Activated CD8-positive, alpha-beta T cell treated with anti-CD3 and anti-CD28 coated beads for 36 hours (primary cell): ENCODE measurements at regions of chr3 and their contacts with region 1.

Region 1: DNA sequence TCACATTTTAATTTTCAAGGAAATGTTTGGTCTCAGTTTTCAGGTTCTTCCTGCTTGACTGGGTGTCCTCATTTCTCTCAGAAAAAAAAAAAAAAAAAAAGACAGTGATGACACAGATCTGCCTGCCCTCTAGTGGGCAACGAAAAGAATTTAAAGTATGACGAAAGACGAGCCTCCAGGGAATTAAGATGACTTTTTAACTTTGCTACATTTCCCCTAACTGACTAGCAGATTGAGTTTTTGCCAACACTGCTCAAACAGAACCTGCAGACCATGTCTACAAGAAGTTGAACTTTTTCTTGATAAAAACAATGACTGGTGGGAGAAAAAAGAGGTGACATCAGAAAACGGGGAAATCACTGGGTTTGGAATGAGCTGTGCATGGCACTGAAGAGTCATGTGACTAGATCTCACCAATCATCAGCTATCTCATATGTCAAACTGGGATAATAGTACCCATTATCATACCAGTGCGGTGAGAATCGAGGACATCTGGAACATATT is 40.8 kb downstream of the EOMES start:
- DNase-seq: peak; percentile 16
- ATAC-seq: peak; percentile 87
- H3K4me3 Mint-ChIP-seq: peak overlapping the region; percentile 72
- H3K27ac Mint-ChIP-seq: peak overlapping the region; percentile 85
- H3K4me1 Mint-ChIP-seq: peaks cover 11% of the 10 kb centered on the region
- H3K27me3 Mint-ChIP-seq: peaks cover 3% of the 10 kb centered on the region
- CTCF ChIP-seq: peak; percentile 83

Region 2: GRCh38 chr3:27134165-27134796 is 547.0 kb before region 1 on chr3:
- CTCF ChIA-PET with region 1: interaction called, 14 read pairs
- POLR2A ChIA-PET with region 1: no interaction called
- intact Hi-C with region 1: loop called (anchors 5 kb)
- DNase-seq: peak; percentile 71
- ATAC-seq: peak; percentile 91
- H3K4me3 Mint-ChIP-seq: no peak overlapping the region
- H3K27ac Mint-ChIP-seq: no peak overlapping the region
- H3K4me1 Mint-ChIP-seq: no peaks in the 10 kb centered on the region
- H3K27me3 Mint-ChIP-seq: no peaks in the 10 kb centered on the region
- CTCF ChIP-seq: peak; percentile 90

Region 3: DNA sequence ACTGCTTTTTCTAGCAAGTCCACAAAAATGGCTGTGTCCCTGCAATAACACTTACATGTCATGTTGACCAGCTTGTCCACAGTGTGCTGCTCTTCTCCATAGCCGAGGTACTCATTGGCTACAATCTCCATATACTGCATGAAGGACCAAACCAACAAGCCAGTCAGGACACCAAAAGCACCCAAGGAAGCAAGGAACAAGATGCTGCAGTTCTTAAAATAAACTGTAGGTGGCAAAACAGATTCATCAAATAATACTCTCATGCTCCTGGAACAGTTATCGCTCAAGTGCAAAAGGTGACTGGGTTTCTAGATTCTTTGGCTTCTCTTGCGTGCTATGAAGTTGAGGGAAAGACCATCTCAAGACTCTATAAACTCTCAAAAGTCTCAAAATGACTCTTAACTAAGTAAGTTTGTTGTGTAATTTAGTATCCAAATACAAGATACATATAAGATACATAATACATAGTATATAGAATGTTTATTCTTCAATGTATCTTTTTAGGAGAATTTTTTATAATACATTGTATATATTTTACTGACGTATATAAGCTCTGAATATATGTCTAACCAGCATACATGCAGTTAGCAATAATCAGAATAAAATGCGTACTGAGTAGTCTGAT is 369.1 kb before region 1 on chr3:
- CTCF ChIA-PET with region 1: interaction called, 10 read pairs
- POLR2A ChIA-PET with region 1: no interaction called
- intact Hi-C with region 1: loop called (anchors 1 kb)
- DNase-seq: peak; percentile 1
- ATAC-seq: peak; percentile 77
- H3K4me3 Mint-ChIP-seq: no peak overlapping the region
- H3K27ac Mint-ChIP-seq: no peak overlapping the region
- H3K4me1 Mint-ChIP-seq: no peaks in the 10 kb centered on the region
- H3K27me3 Mint-ChIP-seq: no peaks in the 10 kb centered on the region
- CTCF ChIP-seq: peak; percentile 70

Region 4: DNA sequence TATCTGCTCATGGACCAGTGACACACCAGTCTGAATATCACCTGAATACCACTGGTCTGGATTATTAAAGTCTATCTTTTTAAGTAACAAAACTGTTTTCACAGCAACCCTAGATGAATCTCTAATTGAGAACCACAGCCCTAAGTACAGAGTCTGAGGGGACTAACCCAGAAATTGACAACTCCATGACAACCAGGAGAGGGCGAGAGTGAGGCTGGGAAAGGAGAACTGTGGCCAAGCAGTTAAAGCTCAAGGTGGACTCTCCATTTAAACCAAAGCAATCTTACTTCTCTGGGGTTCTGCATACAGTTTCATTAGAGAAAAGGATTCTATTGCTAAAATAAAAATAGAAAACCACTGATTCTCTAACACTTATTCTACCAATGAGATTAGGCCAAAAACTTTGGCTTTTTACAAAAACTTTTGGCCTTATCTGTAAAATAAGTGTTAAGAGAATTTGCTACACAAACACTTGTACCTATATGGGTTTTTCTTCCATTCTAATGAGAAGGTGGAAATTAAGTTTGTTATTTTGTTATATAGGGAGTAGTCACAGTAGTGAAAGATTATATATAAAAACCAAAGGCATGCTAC is 323.5 kb before region 1 on chr3:
- CTCF ChIA-PET with region 1: interaction called, 13 read pairs
- POLR2A ChIA-PET with region 1: no interaction called
- intact Hi-C with region 1: loop called (anchors 10 kb)
- DNase-seq: peak; percentile 74
- ATAC-seq: peak; percentile 96
- H3K4me3 Mint-ChIP-seq: no peak overlapping the region
- H3K27ac Mint-ChIP-seq: no peak overlapping the region
- H3K4me1 Mint-ChIP-seq: peaks cover 19% of the 10 kb centered on the region
- H3K27me3 Mint-ChIP-seq: no peaks in the 10 kb centered on the region
- CTCF ChIP-seq: peak; percentile 83

Region 5: DNA sequence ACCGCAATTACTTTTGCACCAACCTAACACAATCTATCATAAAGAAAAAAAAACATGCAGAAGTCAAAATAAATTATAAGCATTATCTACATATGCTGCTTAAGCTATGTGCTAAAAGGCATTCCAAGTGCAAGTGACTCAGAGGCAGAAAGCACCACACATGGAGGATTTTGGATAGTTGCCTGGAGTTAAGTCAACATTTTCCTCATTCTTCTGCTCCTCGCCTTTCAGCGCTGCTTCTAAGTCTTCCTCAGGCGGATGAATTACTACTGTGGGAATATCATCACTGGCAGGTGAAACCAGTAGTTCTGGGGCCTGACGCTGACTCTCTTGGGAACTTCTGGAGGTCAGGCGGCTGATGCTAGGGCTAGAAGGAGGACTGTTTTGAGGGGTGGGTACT is 250.2 kb before region 1 on chr3:
- CTCF ChIA-PET with region 1: no interaction called
- POLR2A ChIA-PET with region 1: no interaction called
- intact Hi-C with region 1: no loop called
- DNase-seq: no peak
- ATAC-seq: no peak
- H3K4me3 Mint-ChIP-seq: no peak overlapping the region
- H3K27ac Mint-ChIP-seq: no peak overlapping the region
- H3K4me1 Mint-ChIP-seq: no peaks in the 10 kb centered on the region
- H3K27me3 Mint-ChIP-seq: no peaks in the 10 kb centered on the region
- CTCF ChIP-seq: no peak

Region 6: GRCh38 chr3:27467545-27467944 is 213.8 kb before region 1 on chr3:
- CTCF ChIA-PET with region 1: interaction called, 10 read pairs
- POLR2A ChIA-PET with region 1: no interaction called
- intact Hi-C with region 1: no loop called
- DNase-seq: no peak
- ATAC-seq: peak; percentile 89
- H3K4me3 Mint-ChIP-seq: no peak overlapping the region
- H3K27ac Mint-ChIP-seq: peak overlapping the region; percentile 11
- H3K4me1 Mint-ChIP-seq: peaks cover 12% of the 10 kb centered on the region
- H3K27me3 Mint-ChIP-seq: no peaks in the 10 kb centered on the region
- CTCF ChIP-seq: peak; percentile 63

Region 7: DNA sequence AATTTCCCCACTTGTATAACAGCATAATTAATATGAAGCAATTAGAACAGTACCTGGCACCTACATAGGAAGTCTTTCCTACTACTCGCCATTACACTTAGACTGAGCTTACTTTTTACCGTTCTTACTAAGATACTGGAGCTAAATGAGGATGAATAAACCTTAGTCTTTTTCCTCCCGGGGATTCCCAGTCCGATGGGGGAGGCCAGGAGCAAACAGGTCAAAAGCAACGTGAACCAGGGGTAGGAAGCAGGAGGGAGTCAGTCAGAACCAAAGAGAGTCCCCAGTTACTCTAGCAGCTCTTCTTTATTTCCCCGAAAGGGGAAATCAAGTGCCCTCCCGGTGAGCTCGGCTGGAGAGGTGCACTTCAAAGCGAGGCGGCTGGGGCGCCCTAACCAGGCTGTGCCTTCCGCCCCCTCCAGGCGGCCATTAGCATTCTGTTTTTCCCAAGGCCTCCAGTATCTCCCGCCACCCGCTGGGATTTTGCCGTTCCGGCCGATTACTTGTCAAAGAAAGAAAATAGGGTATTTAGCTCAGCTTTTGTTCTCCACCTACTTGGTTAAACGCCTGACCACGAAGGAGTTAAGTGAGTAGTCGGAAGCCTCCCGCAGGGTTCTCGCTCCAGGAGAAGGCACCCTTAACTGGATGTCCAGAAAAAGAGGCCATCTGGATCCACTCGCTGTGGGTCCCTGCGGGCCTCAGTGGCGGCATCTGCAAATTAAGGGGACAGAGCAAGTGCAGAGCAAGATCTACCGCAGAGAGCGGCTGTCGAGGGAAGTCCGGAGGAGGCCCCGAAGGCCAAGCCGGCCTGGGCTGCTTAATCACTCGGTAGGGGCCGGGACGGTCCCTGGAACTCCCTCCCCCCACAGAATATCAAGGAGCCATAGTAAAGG is 47.1 kb after region 1 on chr3:
- CTCF ChIA-PET with region 1: no interaction called
- POLR2A ChIA-PET with region 1: no interaction called
- intact Hi-C with region 1: no loop called
- DNase-seq: peak; percentile 52
- ATAC-seq: peak; percentile 60
- H3K4me3 Mint-ChIP-seq: peak overlapping the region; percentile 63
- H3K27ac Mint-ChIP-seq: no peak overlapping the region
- H3K4me1 Mint-ChIP-seq: peaks cover 46% of the 10 kb centered on the region
- H3K27me3 Mint-ChIP-seq: peaks cover 75% of the 10 kb centered on the region
- CTCF ChIP-seq: no peak